GM12878 (cell line): ENCODE measurements at regions of chr2 and their contacts with region 1.

Region 1: DNA sequence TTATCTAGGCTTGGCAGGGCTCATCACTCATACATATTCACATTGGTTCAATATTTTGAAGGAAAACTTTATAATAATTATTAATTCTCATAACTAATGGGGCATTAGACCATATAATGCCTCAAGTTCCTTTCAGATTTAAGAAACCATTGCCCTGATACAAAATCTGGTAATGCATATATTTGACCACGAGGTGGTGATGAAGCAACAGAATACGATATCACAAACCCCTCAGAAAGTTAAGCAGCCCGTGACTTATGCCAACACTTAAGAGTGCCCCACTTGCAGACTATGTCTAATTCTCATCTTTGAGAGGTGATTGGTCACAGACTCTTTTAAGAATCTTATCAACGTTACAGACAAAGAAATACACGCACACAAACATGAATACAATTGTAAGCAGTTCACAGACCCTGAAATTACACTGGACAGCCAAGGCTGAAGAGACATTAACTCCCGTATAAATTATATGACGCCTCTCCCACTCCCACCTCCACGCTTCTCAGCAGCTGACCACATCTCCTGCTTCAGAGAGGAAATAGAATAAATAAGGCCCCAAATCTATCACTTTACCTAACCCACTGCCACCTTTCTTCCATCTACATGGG is 20.7 kb upstream of the DNAH6 start:
- DNase-seq: no peak
- ATAC-seq: peak; percentile 93
- H3K4me3 ChIP-seq: no peak overlapping the region
- H3K27ac ChIP-seq: no peak overlapping the region
- H3K4me1 ChIP-seq: no peaks in the 10 kb centered on the region
- H3K27me3 ChIP-seq: no peaks in the 10 kb centered on the region
- CTCF ChIP-seq: peak; percentile 41 to 80 (median 53); a peak in 5 of 6 replicates
- EP300 ChIP-seq: no peak
- POLR2A ChIP-seq: no peak
- RAD21 ChIP-seq: peak; percentile 93

Region 2: DNA sequence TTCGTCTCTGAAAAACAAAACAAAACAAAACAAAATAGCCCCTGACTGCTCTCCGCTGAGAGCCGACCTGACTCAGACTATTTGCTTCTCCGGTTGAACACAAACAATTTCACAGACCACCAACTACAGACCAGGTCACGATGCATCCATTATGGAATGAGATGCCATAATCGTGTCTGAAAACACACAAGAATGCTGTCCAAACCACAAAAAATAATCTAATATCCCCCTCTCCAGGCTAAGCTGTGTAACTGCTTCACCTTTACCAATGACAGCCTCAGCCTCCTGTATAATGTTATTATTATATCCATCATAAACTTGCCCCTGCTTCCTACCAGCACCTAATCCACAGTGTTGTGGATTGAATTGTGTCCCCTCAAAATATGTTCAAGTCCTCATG is 135.4 kb after region 1 on chr2:
- CTCF ChIA-PET with region 1: interaction called, 4 read pairs
- POLR2A ChIA-PET with region 1: no interaction called
- RAD21 ChIA-PET with region 1: no interaction called
- SMC1A ChIA-PET with region 1: interaction called, 3 read pairs
- in situ Hi-C with region 1: no loop called
- intact Hi-C with region 1: loop called (anchors 1 kb)
- DNase-seq: no peak
- ATAC-seq: peak; percentile 70
- H3K4me3 ChIP-seq: no peak overlapping the region
- H3K27ac ChIP-seq: no peak overlapping the region
- H3K4me1 ChIP-seq: no peaks in the 10 kb centered on the region
- H3K27me3 ChIP-seq: no peaks in the 10 kb centered on the region
- CTCF ChIP-seq: peak in 2 of 3 experiments; percentile 50 to 52; a peak in 3 of 6 replicates
- EP300 ChIP-seq: no peak
- POLR2A ChIP-seq: no peak
- RAD21 ChIP-seq: peak; percentile 60

Region 3: DNA sequence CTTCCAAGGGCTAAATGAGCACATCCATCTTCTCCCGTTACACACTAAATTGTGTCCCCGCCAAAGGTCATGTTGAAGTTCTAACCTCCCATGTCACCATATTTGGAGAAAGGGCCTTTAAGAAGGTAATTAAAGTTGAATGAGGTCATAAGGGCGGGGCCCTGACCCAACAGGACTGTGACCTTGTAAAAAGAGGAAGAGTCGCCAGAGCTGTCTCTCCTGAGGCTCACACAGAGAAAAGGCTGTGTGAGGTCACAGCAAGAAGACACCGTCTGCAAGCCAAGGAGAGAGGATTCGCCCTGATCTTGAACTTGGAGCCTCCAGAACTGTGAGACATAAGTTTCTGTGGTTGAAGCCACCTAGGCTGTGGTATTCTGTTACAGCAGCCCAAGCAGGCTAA is 361.1 kb after region 1 on chr2:
- CTCF ChIA-PET with region 1: interaction called, 6 read pairs
- POLR2A ChIA-PET with region 1: interaction called, 3 read pairs
- RAD21 ChIA-PET with region 1: interaction called, 4 read pairs
- SMC1A ChIA-PET with region 1: interaction called, 11 read pairs
- in situ Hi-C with region 1: no loop called
- intact Hi-C with region 1: no loop called
- DNase-seq: no peak
- ATAC-seq: peak; percentile 94
- H3K4me3 ChIP-seq: no peak overlapping the region
- H3K27ac ChIP-seq: no peak overlapping the region
- H3K4me1 ChIP-seq: no peaks in the 10 kb centered on the region
- H3K27me3 ChIP-seq: no peaks in the 10 kb centered on the region
- CTCF ChIP-seq: no peak
- EP300 ChIP-seq: no peak
- POLR2A ChIP-seq: no peak
- RAD21 ChIP-seq: no peak

Region 4: GRCh38 chr2:84865181-84865783 is 369.6 kb after region 1 on chr2:
- CTCF ChIA-PET with region 1: interaction called, 4 read pairs
- POLR2A ChIA-PET with region 1: interaction called, 3 read pairs
- RAD21 ChIA-PET with region 1: interaction called, 10 read pairs
- SMC1A ChIA-PET with region 1: interaction called, 3 read pairs
- in situ Hi-C with region 1: loop called (anchors 5 kb)
- intact Hi-C with region 1: loop called (anchors 1 kb)
- DNase-seq: no peak
- ATAC-seq: peak; percentile 87
- H3K4me3 ChIP-seq: no peak overlapping the region
- H3K27ac ChIP-seq: no peak overlapping the region
- H3K4me1 ChIP-seq: no peaks in the 10 kb centered on the region
- H3K27me3 ChIP-seq: no peaks in the 10 kb centered on the region
- CTCF ChIP-seq: peak; percentile 41 to 75 (median 61); a peak in 4 of 6 replicates
- EP300 ChIP-seq: no peak
- POLR2A ChIP-seq: no peak
- RAD21 ChIP-seq: peak; percentile 73

Region 5: DNA sequence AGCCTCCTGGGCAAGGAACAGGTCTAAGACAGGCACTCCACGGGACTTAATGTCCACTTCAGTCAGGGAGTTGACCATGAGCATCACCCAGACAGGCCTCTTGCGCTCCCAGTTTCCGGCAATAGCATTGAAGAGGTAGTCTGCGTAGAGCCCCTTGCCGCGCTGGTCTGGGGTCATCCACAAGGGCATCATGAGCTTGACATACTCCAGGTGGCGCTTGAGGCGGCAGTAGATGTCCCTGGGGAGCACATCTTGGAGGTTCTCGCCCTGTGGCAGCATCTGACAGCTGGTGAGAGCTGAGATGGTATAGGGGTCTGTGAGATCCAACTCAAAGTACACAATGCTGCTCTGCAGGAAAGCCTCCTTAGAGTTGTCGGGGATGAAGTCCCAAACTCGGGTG is 374.7 kb after region 1 on chr2:
- CTCF ChIA-PET with region 1: interaction called, 3 read pairs
- POLR2A ChIA-PET with region 1: no interaction called
- RAD21 ChIA-PET with region 1: interaction called, 5 read pairs
- SMC1A ChIA-PET with region 1: interaction called, 3 read pairs
- in situ Hi-C with region 1: loop called (anchors 5 kb)
- intact Hi-C with region 1: loop called (anchors 1 kb)
- DNase-seq: no peak
- ATAC-seq: peak; percentile 79
- H3K4me3 ChIP-seq: no peak overlapping the region
- H3K27ac ChIP-seq: no peak overlapping the region
- H3K4me1 ChIP-seq: no peaks in the 10 kb centered on the region
- H3K27me3 ChIP-seq: no peaks in the 10 kb centered on the region
- CTCF ChIP-seq: peak; percentile 21 to 34 (median 32); a peak in 4 of 6 replicates
- EP300 ChIP-seq: no peak
- POLR2A ChIP-seq: no peak
- RAD21 ChIP-seq: peak; percentile 41

Region 6: GRCh38 chr2:84881581-84882414 is 386.2 kb after region 1 on chr2:
- CTCF ChIA-PET with region 1: no interaction called
- POLR2A ChIA-PET with region 1: no interaction called
- RAD21 ChIA-PET with region 1: no interaction called
- SMC1A ChIA-PET with region 1: interaction called, 5 read pairs
- in situ Hi-C with region 1: no loop called
- intact Hi-C with region 1: loop called (anchors 1 kb)
- DNase-seq: no peak
- ATAC-seq: peak; percentile 71
- H3K4me3 ChIP-seq: peak overlapping the region; percentile 67
- H3K27ac ChIP-seq: no peak overlapping the region
- H3K4me1 ChIP-seq: peaks cover 16% of the 10 kb centered on the region
- H3K27me3 ChIP-seq: peaks cover 0 to 9% of the 10 kb centered on the region in 2 experiments; a peak in 3 of 4 replicates
- CTCF ChIP-seq: peak; percentile 59 to 76 (median 74)
- EP300 ChIP-seq: no peak
- POLR2A ChIP-seq: no peak
- RAD21 ChIP-seq: peak; percentile 66

Region 7: DNA sequence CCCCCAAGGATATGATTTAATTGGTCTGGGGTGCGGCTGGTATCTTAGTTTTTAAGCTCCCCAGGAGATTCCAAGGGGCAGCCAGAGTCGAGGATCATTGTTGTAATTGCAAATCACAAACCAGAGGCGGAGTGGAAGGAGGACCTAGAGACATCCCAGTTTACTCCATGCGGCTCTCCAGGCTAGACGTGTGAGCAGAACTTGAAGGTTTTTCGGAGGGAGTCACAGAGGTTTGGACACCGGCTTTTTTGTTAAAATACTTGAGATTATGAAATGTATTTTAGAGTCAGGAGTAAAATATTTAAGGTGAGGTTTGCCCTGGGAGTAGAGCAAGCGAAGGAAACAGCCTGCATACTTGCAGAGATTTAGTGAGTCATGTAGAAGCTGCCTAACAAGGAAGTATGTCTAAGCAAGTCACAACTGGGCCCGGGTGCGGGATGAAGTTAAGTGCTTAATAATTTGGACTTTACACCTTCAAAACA is 792.6 kb after region 1 on chr2:
- CTCF ChIA-PET with region 1: interaction called, 3 read pairs
- POLR2A ChIA-PET with region 1: no interaction called
- RAD21 ChIA-PET with region 1: no interaction called
- SMC1A ChIA-PET with region 1: no interaction called
- in situ Hi-C with region 1: loop called (anchors 10 kb)
- intact Hi-C with region 1: loop called (anchors 5 kb)
- DNase-seq: no peak
- ATAC-seq: no peak
- H3K4me3 ChIP-seq: no peak overlapping the region
- H3K27ac ChIP-seq: no peak overlapping the region
- H3K4me1 ChIP-seq: no peaks in the 10 kb centered on the region; the same call in 1 of the 2 replicates
- H3K27me3 ChIP-seq: no peaks in the 10 kb centered on the region; a peak in 1 of 4 replicates
- CTCF ChIP-seq: no peak
- EP300 ChIP-seq: no peak
- POLR2A ChIP-seq: no peak
- RAD21 ChIP-seq: no peak